CD8-positive, alpha-beta memory T cell (primary cell): ENCODE measurements at regions of chr15 and their contacts with region 1.

Region 1: DNA sequence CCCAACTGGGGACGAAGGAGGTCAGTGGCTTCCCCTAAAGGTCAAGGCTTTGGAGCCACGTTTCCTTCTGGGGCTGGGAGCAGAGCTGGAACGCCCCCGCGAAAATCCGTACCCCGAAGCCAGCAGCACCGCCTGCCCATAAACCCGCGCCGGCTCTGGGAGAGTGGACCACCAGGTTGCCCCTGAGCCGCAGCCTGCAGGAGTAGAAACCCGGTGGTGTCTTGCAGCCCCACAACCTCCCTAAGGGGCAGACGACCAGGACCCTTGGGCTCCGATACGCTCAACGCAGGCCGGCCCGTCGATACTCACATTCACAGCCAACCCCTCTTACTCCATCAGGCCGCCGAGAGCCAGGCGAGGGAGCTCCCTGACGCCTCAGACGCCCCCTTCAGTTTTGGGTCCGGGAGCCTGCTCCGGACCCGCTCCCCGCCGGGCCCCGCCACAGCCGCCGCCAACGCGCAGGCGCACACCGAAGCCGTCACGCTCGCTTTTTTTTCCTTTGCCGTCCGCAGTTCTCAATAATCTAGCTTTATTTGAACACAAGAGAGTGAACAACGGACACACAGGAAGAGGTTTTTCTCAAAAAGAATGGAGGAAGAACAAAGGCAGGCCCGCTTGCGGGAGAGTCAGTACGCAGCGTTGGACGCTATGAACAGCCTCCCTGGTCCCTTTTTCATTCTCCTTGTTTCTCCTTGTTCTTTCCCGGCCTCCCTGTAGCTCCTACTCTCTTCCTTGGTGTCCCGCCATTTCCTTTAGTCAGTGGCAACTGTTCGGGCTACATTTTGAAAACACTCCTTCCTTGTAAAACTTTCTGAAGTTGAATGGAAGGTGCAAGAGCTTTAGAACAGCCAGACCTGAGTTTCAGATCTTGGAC is at the start of gene ZNF106:
- DNase-seq: peak; percentile 82 to 92 (median 91)
- H3K4me3 ChIP-seq: peak within 1 kb of the TSS; percentile 82
- H3K4me3 Mint-ChIP-seq: peak within 1 kb of the TSS; percentile 95 to 100 (median 99)
- H3K27ac ChIP-seq: peak within 1 kb of the TSS; percentile 92
- H3K27ac Mint-ChIP-seq: peak within 1 kb of the TSS; percentile 95 to 100 (median 99)
- H3K4me1 ChIP-seq: peaks cover 37% of the 10 kb centered on the region
- H3K4me1 Mint-ChIP-seq: peaks cover 46 to 68% (median 54%) of the 10 kb centered on the region in 3 donors
- H3K27me3 ChIP-seq: no peaks in the 10 kb centered on the region
- H3K27me3 Mint-ChIP-seq: no peaks in the 10 kb centered on the region
- total RNA-seq, gene ZNF106: 48.5 to 50.0 TPM

Region 2: DNA sequence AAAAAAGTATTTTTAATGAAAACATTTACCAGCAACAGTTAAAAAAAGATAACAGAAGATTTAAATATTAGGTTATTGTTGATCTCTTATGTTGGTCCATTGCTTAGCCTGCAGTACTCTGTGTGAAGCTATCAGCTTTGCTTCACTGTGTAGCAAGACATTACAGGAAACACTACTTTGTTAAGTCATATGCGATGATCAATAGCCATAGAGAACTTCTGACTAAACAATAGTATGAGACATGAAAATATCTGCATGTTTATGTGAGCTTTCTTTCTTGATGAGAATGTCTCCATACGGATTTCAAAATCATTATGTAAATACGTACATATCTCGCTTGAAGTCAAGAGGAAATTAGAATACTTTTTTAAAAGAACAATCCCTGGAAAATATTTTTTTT is 158.6 kb before region 1 on chr15:
- CTCF ChIA-PET with region 1: no interaction called
- POLR2A ChIA-PET with region 1: no interaction called
- DNase-seq: no peak
- H3K4me3 ChIP-seq: no peak overlapping the region
- H3K4me3 Mint-ChIP-seq: no peak overlapping the region
- H3K27ac ChIP-seq: no peak overlapping the region
- H3K27ac Mint-ChIP-seq: peak overlapping the region in 1 of 8 donors; percentile 57
- H3K4me1 ChIP-seq: no peaks in the 10 kb centered on the region
- H3K4me1 Mint-ChIP-seq: no peaks in the 10 kb centered on the region
- H3K27me3 ChIP-seq: no peaks in the 10 kb centered on the region
- H3K27me3 Mint-ChIP-seq: no peaks in the 10 kb centered on the region

Region 3: DNA sequence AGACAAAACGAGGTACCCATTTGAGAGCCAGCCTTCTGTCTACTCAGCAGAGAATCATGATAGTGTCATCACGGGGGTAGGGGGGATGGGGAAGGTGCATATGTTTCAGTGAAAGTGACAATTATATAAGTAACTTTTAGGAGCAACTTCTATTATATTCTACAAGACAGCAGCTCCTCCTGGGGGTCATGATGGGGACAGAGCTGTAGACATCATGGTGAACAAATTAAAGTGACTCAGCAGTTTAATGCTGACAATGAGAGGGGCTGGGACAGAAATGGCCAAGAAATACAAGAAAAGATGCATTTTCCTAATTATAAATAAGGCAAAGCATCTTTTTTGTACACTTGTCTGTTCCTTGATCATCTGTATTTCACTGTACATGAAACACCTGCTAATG is 119.8 kb before region 1 on chr15:
- CTCF ChIA-PET with region 1: no interaction called
- POLR2A ChIA-PET with region 1: no interaction called
- DNase-seq: no peak
- H3K4me3 ChIP-seq: no peak overlapping the region
- H3K4me3 Mint-ChIP-seq: no peak overlapping the region
- H3K27ac ChIP-seq: no peak overlapping the region
- H3K27ac Mint-ChIP-seq: peak overlapping the region in 1 of 8 donors; percentile 18
- H3K4me1 ChIP-seq: no peaks in the 10 kb centered on the region
- H3K4me1 Mint-ChIP-seq: no peaks in the 10 kb centered on the region
- H3K27me3 ChIP-seq: no peaks in the 10 kb centered on the region
- H3K27me3 Mint-ChIP-seq: no peaks in the 10 kb centered on the region

Region 4: DNA sequence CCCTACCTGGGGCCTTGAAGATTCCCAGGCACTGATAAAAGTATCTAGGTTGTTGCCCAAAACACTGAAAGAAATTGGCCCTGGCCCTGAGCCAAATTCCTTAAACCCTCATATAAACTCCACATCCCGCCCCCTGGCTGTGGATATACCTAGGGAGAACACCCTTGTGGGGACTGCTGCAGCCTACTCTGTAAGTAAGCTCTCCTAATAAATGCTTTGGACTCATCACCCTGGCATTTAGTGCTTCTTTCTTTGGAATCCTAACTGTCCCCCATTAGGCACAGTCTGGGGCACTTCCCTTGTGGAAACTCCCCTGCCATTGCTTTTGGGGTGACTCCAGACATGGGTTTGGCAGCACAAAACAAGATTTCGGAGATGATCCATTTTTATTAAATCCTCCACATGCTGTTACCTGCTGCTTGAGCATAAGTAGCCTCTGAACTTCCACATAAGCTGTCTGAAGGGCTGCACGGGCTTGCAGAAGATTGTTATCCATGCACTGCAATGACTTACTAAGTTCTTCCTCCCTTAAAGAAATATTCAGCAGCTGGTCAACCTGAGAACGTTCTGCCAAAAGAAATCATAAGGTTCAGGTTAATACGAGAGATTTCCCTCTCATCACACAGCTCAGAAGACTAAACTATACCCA is 46.4 kb before region 1 on chr15:
- CTCF ChIA-PET with region 1: no interaction called
- POLR2A ChIA-PET with region 1: interaction called, 10 read pairs
- DNase-seq: no peak
- H3K4me3 ChIP-seq: no peak overlapping the region
- H3K4me3 Mint-ChIP-seq: no peak overlapping the region
- H3K27ac ChIP-seq: no peak overlapping the region
- H3K27ac Mint-ChIP-seq: peak overlapping the region in 2 of 8 donors; percentile 17 to 70
- H3K4me1 ChIP-seq: no peaks in the 10 kb centered on the region
- H3K4me1 Mint-ChIP-seq: peaks cover 0 to 5% (median 0%) of the 10 kb centered on the region in 3 donors
- H3K27me3 ChIP-seq: no peaks in the 10 kb centered on the region
- H3K27me3 Mint-ChIP-seq: no peaks in the 10 kb centered on the region

Region 5: GRCh38 chr15:42558739-42559138 is 67.8 kb after region 1 on chr15:
- CTCF ChIA-PET with region 1: no interaction called
- POLR2A ChIA-PET with region 1: no interaction called
- DNase-seq: no peak
- H3K4me3 ChIP-seq: no peak overlapping the region
- H3K4me3 Mint-ChIP-seq: no peak overlapping the region
- H3K27ac ChIP-seq: no peak overlapping the region
- H3K27ac Mint-ChIP-seq: no peak overlapping the region
- H3K4me1 ChIP-seq: no peaks in the 10 kb centered on the region
- H3K4me1 Mint-ChIP-seq: peaks cover 6 to 11% (median 10%) of the 10 kb centered on the region in 3 donors
- H3K27me3 ChIP-seq: no peaks in the 10 kb centered on the region
- H3K27me3 Mint-ChIP-seq: no peaks in the 10 kb centered on the region

Region 6: GRCh38 chr15:42704492-42704926 is 213.6 kb after region 1 on chr15:
- CTCF ChIA-PET with region 1: no interaction called
- POLR2A ChIA-PET with region 1: no interaction called
- DNase-seq: peak; percentile 20 to 66 (median 41)
- H3K4me3 ChIP-seq: no peak overlapping the region
- H3K4me3 Mint-ChIP-seq: no peak overlapping the region
- H3K27ac ChIP-seq: no peak overlapping the region
- H3K27ac Mint-ChIP-seq: no peak overlapping the region
- H3K4me1 ChIP-seq: no peaks in the 10 kb centered on the region
- H3K4me1 Mint-ChIP-seq: no peaks in the 10 kb centered on the region
- H3K27me3 ChIP-seq: no peaks in the 10 kb centered on the region
- H3K27me3 Mint-ChIP-seq: no peaks in the 10 kb centered on the region